Ovary (tissue), 10 donors: ENCODE measurements at regions of chr4 and their contacts with region 1.

Region 1: GRCh38 chr4:157045507-157046127 is 30.3 kb upstream of the GLRB start:
- DNase-seq: peak in 3 of 5 donors; percentile 16 to 31 (median 30)
- H3K4me3 ChIP-seq: no peak overlapping the region
- H3K27ac ChIP-seq: no peak overlapping the region
- H3K4me1 ChIP-seq: no peaks in the 10 kb centered on the region
- H3K27me3 ChIP-seq: no peaks in the 10 kb centered on the region
- CTCF ChIP-seq: peak; percentile 53 to 65 (median 62)
- EP300 ChIP-seq: no peak
- POLR2A ChIP-seq: no peak

Region 2: DNA sequence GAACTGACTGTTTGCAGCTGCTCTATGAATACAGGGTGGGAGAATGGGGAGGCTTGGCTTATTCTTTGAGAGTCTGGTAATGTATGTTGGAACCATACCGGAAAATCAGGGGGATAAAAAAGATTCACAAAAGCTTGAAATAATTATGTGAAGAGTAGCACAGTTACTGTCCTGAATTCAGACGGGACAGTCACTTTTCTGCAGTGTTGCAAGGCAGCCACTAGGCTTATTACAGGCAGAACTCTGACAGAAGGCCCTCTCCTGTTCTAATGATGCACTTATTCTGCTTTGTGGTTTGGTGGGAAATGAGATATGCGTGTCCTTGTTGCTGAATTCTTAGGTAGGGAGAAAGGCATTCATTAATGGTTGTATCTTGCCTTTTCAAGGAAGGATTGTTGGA is 1249.6 kb before region 1 on chr4:
- intact Hi-C with region 1: loop called in 1 of 4 experiments (anchors 10 kb)
- DNase-seq: no peak
- H3K4me3 ChIP-seq: no peak overlapping the region
- H3K27ac ChIP-seq: no peak overlapping the region
- H3K4me1 ChIP-seq: no peaks in the 10 kb centered on the region
- H3K27me3 ChIP-seq: no peaks in the 10 kb centered on the region
- CTCF ChIP-seq: no peak
- EP300 ChIP-seq: no peak
- POLR2A ChIP-seq: no peak

Region 3: DNA sequence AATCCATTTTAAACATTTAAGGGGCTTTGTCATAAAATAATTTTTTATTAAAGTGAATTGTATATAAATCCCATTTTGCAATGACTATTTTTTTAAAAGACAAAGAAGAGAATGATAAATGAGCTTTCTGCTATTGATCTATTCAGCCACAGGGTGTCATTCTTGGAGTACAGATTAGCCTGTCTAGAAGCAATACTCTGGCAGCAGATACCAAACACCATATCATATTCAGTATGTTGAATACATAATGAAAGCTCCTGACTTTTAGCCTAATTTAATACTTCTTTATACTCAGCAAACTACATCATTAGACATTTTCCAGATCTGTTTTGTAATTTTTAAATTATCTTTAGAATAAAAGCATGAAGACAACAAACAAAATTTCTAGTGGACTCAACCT is 570.3 kb before region 1 on chr4:
- intact Hi-C with region 1: loop called in 1 of 4 experiments (anchors 10 kb)
- DNase-seq: no peak
- H3K4me3 ChIP-seq: no peak overlapping the region
- H3K27ac ChIP-seq: no peak overlapping the region
- H3K4me1 ChIP-seq: no peaks in the 10 kb centered on the region
- H3K27me3 ChIP-seq: no peaks in the 10 kb centered on the region
- CTCF ChIP-seq: peak in 2 of 3 donors; percentile 30 to 40
- EP300 ChIP-seq: no peak
- POLR2A ChIP-seq: no peak